Naive thymus-derived CD4-positive, alpha-beta T cell (primary cell): ENCODE measurements at regions of chr19 and their contacts with region 1.

Region 1: DNA sequence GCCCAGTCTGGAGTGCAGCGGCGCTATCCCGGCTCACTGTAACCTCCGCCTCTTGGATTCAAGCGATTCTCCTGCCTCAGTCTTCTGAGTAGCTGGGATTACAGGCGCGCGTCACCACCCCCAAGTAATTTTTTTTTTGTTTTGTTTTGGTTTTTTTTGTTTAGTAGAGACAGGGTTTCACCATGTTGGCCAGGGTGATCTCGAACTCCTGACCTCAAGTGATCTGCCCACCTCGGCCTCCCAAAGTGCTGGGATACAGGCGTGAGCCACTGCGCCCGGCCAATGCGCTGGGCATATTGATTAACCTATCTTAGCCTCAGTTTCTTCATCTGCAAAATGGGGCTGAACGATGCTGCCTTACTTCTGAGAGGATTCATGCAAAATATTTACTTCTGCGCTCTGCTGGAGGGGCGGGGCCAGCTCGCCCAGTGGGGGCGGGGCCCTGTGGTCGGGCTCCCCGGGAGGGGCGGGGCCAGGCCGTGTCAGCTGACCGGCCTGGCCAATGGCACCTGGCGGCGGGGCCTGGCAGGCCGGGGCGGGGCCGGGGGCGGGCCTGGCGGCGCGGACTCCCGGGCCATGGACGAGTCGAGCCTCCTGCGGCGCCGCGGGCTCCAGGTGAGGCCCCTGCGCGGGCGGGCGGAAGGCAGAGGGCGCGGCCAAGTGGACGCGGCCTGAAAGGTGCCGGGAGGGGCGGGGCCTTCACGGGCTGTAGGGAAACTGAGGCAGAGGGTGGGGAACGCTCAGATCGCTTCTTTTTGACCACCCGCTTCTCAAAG is at the start of gene MAST3:
- DNase-seq: peak; percentile 82 to 96 (median 93)
- ATAC-seq: peak; percentile 100
- H3K4me3 ChIP-seq: peak within 1 kb of the TSS; percentile 31
- H3K4me3 Mint-ChIP-seq: peak within 1 kb of the TSS; percentile 86 to 89 (median 87)
- H3K27ac ChIP-seq: peak within 1 kb of the TSS; percentile 70
- H3K27ac Mint-ChIP-seq: peak within 1 kb of the TSS in 8 of 9 donors; percentile 73 to 94 (median 87)
- H3K4me1 ChIP-seq: peaks cover 21 to 22% of the 10 kb centered on the region in 2 donors
- H3K4me1 Mint-ChIP-seq: peaks cover 18 to 55% (median 49%) of the 10 kb centered on the region in 7 donors
- H3K27me3 ChIP-seq: no peaks in the 10 kb centered on the region
- H3K27me3 Mint-ChIP-seq: peaks cover 0 to 16% (median 0%) of the 10 kb centered on the region in 5 donors
- total RNA-seq, gene MAST3: 36.0 to 58.7 (median 50.6) TPM

Region 2: GRCh38 chr19:17993076-17993813 is 104.2 kb before region 1 on chr19:
- CTCF ChIA-PET with region 1: no interaction called
- POLR2A ChIA-PET with region 1: no interaction called
- intact Hi-C with region 1: no loop called
- DNase-seq: no peak
- ATAC-seq: no peak
- H3K4me3 ChIP-seq: no peak overlapping the region
- H3K4me3 Mint-ChIP-seq: no peak overlapping the region
- H3K27ac ChIP-seq: no peak overlapping the region
- H3K27ac Mint-ChIP-seq: no peak overlapping the region
- H3K4me1 ChIP-seq: peaks cover 0 to 7% of the 10 kb centered on the region in 2 donors
- H3K4me1 Mint-ChIP-seq: peaks cover 0 to 6% (median 4%) of the 10 kb centered on the region in 7 donors
- H3K27me3 ChIP-seq: no peaks in the 10 kb centered on the region
- H3K27me3 Mint-ChIP-seq: peaks cover 0 to 14% (median 0%) of the 10 kb centered on the region in 5 donors

Region 3: DNA sequence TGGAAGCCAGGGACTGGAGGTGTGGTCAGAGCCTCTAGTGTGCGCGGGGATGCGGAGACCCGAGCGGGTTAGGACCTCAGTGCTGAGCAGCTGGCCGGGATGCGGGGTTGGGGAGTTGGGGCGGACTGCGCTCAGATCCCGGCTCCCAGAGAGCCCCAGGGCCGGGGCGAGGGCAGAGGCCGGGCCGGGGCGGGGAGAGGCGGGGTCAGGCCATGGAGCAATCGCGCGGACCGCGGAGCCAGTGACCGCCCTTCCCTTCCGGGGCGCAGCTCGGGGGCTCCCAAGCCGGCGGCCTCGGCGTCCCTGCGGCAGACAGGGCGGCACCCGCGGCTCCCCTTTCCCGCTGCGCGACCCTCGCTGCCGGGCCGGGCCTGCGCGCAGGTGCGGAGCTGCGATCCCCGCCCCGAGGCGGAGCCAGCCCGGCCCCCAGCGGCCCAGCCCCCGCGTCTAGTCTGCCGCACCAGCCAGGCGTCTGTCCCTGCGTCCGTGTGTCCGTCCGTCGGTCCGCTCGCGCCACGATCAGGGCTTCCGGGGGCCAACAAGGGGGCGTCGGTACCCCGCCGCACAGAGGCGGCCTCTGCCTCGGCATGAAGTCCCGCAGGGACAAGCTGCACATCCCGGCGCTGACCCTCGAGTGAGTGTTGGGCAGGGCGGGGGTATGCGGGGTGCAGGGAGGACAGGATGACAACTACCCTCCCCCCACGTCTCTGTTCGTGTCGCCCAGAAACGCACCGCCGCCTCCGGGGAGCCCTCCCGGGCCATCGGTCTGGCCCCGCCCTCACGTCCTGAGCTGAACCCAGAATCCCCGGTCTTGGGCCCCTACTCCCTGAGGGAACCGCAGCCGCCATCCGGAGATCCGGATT is 12.6 kb after region 1 on chr19:
- CTCF ChIA-PET with region 1: interaction called, 14 read pairs
- POLR2A ChIA-PET with region 1: interaction called, 169 read pairs
- intact Hi-C with region 1: loop called in 1 of 2 experiments (anchors 1 kb)
- DNase-seq: peak in 5 of 9 donors; percentile 31 to 72 (median 43)
- ATAC-seq: peak; percentile 72
- H3K4me3 ChIP-seq: peak overlapping the region; percentile 72
- H3K4me3 Mint-ChIP-seq: peak overlapping the region; percentile 70 to 91 (median 83)
- H3K27ac ChIP-seq: peak overlapping the region; percentile 85
- H3K27ac Mint-ChIP-seq: peak overlapping the region in 7 of 9 donors; percentile 79 to 96 (median 88)
- H3K4me1 ChIP-seq: peaks cover 9 to 11% of the 10 kb centered on the region in 2 donors
- H3K4me1 Mint-ChIP-seq: peaks cover 18 to 28% (median 22%) of the 10 kb centered on the region in 7 donors
- H3K27me3 ChIP-seq: no peaks in the 10 kb centered on the region
- H3K27me3 Mint-ChIP-seq: peaks cover 0 to 3% (median 0%) of the 10 kb centered on the region in 5 donors